ENCODE measurements at regions of chr6 and their contacts with region 1.

Region 1: DNA sequence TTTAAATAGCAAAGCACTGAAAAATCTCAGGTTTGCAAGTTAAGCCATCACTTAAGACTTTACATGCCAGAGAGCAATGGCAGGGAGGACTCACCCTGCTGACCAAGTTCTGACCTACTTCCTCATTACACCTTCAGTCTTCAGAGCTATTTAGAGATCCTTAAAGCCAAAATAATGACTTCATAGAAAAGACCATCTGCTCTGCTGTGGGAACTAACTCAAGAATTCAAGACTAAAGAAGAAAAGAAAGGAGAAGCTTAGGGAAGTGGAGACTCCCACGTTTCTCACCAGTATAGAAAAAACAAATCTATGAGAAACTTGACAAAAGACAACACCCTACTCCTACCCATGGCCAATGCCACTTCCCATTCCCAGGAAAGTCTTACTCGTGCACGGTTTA is 28.6 kb downstream of the XPO5 start:
- DNase-seq: no peak
- H3K4me3 ChIP-seq: no peak overlapping the region
- H3K27ac ChIP-seq: no peak overlapping the region
- H3K4me1 ChIP-seq: no peaks in the 10 kb centered on the region
- H3K27me3 ChIP-seq: no peaks in the 10 kb centered on the region
- CTCF ChIP-seq: no peak

Region 2: DNA sequence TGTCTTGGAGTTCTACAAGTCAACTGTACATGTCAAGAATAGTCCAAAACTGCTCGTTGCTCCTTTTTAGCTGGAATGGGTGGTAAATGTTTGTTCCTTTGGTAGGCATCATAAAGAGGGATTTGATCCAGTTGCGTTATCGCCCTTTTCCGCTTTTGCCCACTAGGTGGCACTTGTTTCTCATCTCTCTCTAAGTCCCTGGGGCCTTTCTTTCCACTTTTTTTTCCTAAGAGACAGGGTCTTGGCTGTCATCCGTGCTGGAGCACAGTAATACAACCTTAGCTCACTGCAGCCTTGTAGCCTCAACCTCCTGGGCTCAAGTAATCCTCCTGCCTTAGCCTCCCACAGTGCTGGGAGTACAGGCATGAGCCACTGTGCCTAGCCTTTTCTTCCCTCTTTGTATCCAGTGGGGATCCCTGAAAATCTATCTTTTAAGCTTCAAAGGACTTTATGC is 61.1 kb after region 1 on chr6:
- CTCF ChIA-PET with region 1: interaction called, 6 read pairs
- POLR2A ChIA-PET with region 1: interaction called, 34 read pairs
- intact Hi-C with region 1: no loop called
- DNase-seq: peak; percentile 60 to 63
- H3K4me3 ChIP-seq: no peak overlapping the region
- H3K27ac ChIP-seq: no peak overlapping the region
- H3K4me1 ChIP-seq: no peaks in the 10 kb centered on the region
- H3K27me3 ChIP-seq: no peaks in the 10 kb centered on the region
- CTCF ChIP-seq: peak; percentile 85

Region 3: GRCh38 chr6:43667245-43668150 is 120.3 kb after region 1 on chr6:
- CTCF ChIA-PET with region 1: no interaction called
- POLR2A ChIA-PET with region 1: no interaction called
- intact Hi-C with region 1: no loop called
- DNase-seq: peak; percentile 61 to 86
- H3K4me3 ChIP-seq: peak overlapping the region; percentile 25; the same call in 1 of the 2 replicates
- H3K27ac ChIP-seq: peak overlapping the region; percentile 43
- H3K4me1 ChIP-seq: peaks cover 62% of the 10 kb centered on the region
- H3K27me3 ChIP-seq: no peaks in the 10 kb centered on the region
- CTCF ChIP-seq: peak; percentile 94

Region 4: DNA sequence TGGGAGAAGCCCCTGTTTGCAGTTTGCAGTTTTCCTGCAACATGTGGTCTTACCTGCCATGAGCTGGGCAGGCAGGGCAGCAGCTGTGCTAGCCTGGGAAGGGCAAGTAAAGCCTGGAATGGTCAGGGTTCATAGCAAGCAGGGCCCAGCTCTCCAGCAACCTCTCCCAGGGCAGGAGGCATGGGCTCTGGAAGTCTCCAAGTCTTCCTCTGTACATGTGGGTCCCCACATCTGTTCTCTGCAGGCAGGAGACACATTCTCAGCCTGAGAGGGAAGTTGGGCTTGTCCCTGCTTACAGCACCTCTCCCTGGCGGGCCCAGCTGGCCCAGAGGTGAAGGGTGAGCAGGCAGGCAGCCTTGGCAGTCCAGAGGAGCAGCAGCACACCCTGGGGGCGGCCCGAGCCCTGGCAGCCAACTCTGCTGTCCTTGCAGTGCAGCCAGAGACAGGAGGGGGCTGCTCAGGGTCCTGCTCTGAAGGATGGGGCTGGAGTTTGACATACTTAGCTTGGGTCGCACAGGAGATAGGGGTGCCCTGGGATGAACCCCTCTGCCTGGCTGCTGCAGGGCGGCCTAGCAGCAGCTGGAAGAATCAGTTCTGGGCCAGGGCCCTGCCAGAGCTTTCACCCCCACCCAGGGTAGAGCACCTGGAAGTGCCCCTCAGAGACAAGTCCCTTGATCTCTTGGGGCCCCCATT is 404.0 kb after region 1 on chr6:
- CTCF ChIA-PET with region 1: no interaction called
- POLR2A ChIA-PET with region 1: no interaction called
- intact Hi-C with region 1: no loop called
- DNase-seq: peak; percentile 44 to 62
- H3K4me3 ChIP-seq: no peak overlapping the region
- H3K27ac ChIP-seq: no peak overlapping the region
- H3K4me1 ChIP-seq: peaks cover 21% of the 10 kb centered on the region
- H3K27me3 ChIP-seq: no peaks in the 10 kb centered on the region
- CTCF ChIP-seq: peak; percentile 63